Activated naive CD4-positive, alpha-beta T cell treated with anti-CD3 and anti-CD28 coated beads for 36 hours (primary cell): ENCODE measurements at regions of chr1 and their contacts with region 1.

Region 1: DNA sequence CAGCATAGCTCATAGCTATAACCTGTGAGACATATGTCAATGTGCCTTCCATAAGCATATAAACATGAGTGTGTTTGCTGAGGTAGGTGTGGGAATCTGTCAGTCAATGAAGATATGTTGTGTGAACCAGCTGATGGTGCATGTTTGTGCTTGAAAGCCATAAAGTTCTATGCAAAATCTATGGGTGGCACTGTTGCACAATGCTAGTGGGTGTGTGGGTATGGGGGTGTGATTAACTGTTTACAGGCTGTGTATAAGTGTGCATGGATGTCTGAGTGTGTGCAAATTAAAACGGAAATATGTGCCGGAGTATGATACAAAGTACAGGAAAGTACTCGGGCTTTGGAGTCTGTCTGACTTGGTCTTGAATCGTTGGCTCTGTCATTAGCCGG is 1.0 kb upstream of the ATP2B4 start:
- DNase-seq: peak; percentile 81
- H3K4me3 Mint-ChIP-seq: peak overlapping the region; percentile 8
- H3K27ac Mint-ChIP-seq: peak overlapping the region; percentile 91
- H3K4me1 Mint-ChIP-seq: peaks cover 65% of the 10 kb centered on the region
- H3K27me3 Mint-ChIP-seq: no peaks in the 10 kb centered on the region

Region 2: DNA sequence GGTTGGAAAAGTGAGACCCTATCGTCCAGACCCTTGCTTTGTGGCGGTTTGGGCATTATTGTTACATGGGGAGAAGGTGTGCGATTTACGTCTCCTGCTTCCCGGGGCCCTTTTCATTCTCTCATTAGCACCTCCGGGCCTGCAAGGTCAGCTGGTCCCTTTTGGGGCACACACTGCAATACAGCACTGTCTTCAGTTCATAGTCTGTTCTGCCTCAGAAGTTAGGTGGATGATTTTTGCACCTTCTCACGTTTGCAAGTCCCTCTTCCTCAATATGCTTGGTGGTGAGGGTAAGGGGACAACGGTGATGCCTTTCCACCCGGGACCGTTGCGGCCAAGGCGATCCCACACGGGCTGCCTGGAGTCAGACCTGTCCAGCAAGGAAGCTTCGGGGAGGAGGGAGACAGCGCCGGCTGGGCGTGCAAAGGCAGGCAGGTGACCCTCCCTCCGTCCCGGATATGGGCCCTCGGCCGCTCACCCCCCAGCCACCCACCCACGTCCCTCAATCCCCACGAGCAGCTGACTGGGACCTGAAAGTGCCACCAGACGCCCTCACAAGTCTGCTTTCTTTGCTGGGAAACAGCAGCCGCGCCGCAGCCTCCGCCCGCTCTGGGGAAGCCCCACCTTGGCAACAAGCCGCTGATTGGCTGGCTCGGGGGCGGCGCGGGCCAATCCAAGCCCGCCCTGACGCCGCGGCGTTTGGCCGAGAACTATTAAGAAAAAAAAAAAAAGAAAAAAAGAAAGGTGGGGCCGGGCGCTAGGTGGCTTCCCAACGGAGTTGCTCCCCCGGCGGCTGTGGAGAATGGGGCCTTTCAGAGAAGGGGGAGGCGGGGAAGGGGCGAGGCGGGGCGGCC is 298.6 kb before region 1 on chr1:
- CTCF ChIA-PET with region 1: no interaction called
- intact Hi-C with region 1: loop called (anchors 5 kb)
- DNase-seq: peak; percentile 96
- H3K4me3 Mint-ChIP-seq: peak overlapping the region; percentile 76
- H3K27ac Mint-ChIP-seq: peak overlapping the region; percentile 90
- H3K4me1 Mint-ChIP-seq: peaks cover 53% of the 10 kb centered on the region
- H3K27me3 Mint-ChIP-seq: no peaks in the 10 kb centered on the region

Region 3: GRCh38 chr1:203448521-203449061 is 177.0 kb before region 1 on chr1:
- CTCF ChIA-PET with region 1: no interaction called
- intact Hi-C with region 1: no loop called
- DNase-seq: no peak
- H3K4me3 Mint-ChIP-seq: no peak overlapping the region
- H3K27ac Mint-ChIP-seq: no peak overlapping the region
- H3K4me1 Mint-ChIP-seq: no peaks in the 10 kb centered on the region
- H3K27me3 Mint-ChIP-seq: peaks cover 14% of the 10 kb centered on the region

Region 4: GRCh38 chr1:203593723-203594122 is 31.9 kb before region 1 on chr1:
- CTCF ChIA-PET with region 1: interaction called, 4 read pairs
- intact Hi-C with region 1: loop called (anchors 1 kb)
- DNase-seq: peak; percentile 69
- H3K4me3 Mint-ChIP-seq: no peak overlapping the region
- H3K27ac Mint-ChIP-seq: peak overlapping the region; percentile 9
- H3K4me1 Mint-ChIP-seq: peaks cover 8% of the 10 kb centered on the region
- H3K27me3 Mint-ChIP-seq: no peaks in the 10 kb centered on the region

Region 5: DNA sequence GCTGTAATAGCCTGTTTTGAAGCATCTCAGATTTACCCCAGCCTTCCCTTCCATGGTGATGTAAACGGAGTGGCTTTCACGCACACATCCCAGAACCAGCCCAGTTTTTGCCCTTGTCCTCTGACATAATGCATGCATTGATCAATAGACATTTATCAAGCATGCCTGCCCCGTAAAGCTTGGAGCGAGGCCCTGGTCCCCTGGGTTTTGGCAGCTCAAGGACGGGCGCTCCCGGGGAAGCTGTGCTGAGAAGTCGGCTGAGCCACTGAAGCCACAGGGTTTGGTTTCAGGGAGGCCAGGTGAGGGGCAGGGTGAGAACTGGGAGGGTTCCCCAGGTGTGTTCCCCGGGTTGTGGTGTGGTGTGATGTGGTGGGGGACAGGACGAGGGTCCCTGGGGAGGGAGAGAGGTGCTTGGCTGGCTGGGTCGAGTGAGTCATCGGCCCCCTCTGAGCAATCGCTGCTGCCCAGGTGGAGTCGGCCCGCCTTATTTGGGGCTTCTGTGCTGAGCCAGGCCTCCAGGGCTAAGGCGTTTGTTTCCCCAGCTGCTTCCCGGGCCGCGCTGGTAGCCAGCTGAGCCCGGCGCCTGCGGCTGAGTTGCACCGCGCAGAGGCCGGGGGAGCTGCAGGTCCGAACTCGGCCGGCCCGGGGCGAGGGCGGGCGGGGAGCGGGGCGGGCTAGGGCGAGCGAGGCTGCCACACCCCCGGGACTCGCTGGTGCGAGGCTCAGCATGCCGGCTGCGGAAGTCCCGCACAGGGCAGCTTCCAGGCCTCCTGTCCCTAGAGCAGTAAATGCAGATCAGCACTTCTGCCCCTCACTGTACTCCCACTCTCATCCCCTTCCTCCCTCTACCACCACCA is 24.6 kb after region 1 on chr1:
- CTCF ChIA-PET with region 1: interaction called, 24 read pairs
- intact Hi-C with region 1: loop called (anchors 1 kb)
- DNase-seq: peak; percentile 76
- H3K4me3 Mint-ChIP-seq: peak overlapping the region; percentile 62
- H3K27ac Mint-ChIP-seq: peak overlapping the region; percentile 46
- H3K4me1 Mint-ChIP-seq: peaks cover 67% of the 10 kb centered on the region
- H3K27me3 Mint-ChIP-seq: no peaks in the 10 kb centered on the region

Region 6: DNA sequence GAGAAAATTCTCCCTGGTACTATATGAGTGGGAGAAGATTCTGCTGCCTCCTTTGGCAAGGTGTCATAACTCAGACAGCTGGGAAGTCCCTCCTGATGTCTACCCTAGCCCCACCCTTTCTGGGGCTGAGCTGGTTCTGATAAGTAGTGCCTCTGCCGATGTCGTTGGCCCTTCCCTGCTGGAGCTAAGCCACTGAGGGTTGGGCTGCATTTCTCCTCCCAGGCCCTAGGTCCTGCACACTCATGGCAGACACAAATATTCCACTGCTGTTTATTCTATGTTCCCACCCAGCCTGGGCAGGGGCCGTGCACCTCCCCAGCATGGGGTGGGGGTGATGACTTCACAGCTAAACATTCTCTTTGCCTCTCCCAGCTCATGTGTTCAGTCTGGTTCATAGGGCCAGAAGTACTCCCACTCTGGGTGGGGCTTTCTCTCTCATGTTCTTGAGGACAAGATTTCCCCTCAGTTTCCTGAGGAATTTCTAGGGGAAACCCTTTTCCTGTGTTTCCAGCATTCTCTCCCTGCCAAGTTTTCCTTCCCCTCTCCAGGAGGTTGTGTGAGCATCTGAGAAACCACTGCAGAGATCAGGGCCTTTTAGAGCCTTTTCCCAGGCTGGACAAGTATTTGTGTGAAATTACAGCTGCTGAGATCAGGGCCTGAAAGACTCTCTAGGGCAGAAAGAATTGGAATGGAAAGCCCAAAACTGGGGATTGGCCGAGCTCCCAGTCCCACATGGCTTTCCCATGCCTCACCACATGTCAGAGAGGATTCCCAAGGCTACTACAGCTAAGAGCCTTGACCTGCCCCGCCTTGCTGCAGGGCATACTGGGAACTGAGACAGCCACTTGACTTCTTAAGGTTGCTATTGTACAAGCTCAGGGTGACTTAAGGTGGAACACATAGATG is 67.2 kb after region 1 on chr1:
- CTCF ChIA-PET with region 1: interaction called, 25 read pairs
- intact Hi-C with region 1: loop called (anchors 2 kb)
- DNase-seq: peak; percentile 54
- H3K4me3 Mint-ChIP-seq: no peak overlapping the region
- H3K27ac Mint-ChIP-seq: no peak overlapping the region
- H3K4me1 Mint-ChIP-seq: peaks cover 10% of the 10 kb centered on the region
- H3K27me3 Mint-ChIP-seq: no peaks in the 10 kb centered on the region

Region 7: GRCh38 chr1:203861379-203862184 is 236.0 kb after region 1 on chr1 and contains the start of gene SNRPE:
- CTCF ChIA-PET with region 1: no interaction called
- intact Hi-C with region 1: loop called (anchors 1 kb)
- DNase-seq: peak; percentile 98
- H3K4me3 Mint-ChIP-seq: peak within 1 kb of the TSS; percentile 100
- H3K27ac Mint-ChIP-seq: peak within 1 kb of the TSS; percentile 95
- H3K4me1 Mint-ChIP-seq: peaks cover 25% of the 10 kb centered on the region
- H3K27me3 Mint-ChIP-seq: no peaks in the 10 kb centered on the region
- total RNA-seq, gene SNRPE: 366 to 370 TPM